H1 (cell line): ENCODE measurements at regions of chr2 and their contacts with region 1.

Region 1: DNA sequence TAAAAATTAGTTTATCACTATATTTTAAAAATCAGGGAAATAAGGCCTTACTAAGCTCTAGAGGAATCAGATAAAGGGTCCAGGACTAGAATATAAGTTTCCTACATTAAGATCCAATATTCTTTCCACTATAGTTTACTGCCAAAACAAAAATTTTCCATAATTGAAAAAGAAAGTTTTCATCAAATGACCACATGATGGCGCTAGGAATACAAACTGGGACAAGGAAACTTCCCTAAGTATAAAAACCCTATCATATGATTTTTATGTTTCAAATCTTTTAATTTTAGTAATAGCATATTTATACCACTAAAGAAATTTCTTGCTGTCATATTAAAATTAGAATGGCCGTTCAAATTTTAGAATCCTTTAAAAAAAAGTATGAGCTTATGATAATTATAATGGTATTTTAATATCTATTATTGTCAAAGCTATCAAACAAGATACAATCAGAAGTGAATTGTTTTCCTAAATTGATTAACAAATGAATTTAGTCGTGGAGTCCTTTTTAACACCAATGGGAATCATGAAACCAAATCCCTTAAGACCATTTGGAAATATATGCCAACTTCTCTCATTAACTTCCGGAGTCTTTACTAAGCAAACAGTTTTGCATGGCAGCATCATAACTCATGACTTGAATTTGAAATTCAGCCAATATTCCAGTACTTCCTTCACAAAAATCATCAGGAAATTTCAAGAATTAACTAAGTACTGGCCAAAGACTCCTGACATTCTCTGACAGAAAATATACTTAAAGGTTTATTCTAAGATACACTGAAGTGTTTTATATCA is 70.3 kb downstream of the SCN1A start:
- DNase-seq: no peak
- H3K4me3 ChIP-seq: no peak overlapping the region
- H3K27ac ChIP-seq: no peak overlapping the region
- H3K4me1 ChIP-seq: no peaks in the 10 kb centered on the region
- H3K27me3 ChIP-seq: no peaks in the 10 kb centered on the region
- CTCF ChIP-seq: peak in 2 of 3 experiments; percentile 28 to 31; a peak in 2 of 4 replicates
- EP300 ChIP-seq: no peak
- POLR2A ChIP-seq: no peak
- RAD21 ChIP-seq: peak in 1 of 2 experiments; percentile 48; a peak in 3 of 4 replicates

Region 2: DNA sequence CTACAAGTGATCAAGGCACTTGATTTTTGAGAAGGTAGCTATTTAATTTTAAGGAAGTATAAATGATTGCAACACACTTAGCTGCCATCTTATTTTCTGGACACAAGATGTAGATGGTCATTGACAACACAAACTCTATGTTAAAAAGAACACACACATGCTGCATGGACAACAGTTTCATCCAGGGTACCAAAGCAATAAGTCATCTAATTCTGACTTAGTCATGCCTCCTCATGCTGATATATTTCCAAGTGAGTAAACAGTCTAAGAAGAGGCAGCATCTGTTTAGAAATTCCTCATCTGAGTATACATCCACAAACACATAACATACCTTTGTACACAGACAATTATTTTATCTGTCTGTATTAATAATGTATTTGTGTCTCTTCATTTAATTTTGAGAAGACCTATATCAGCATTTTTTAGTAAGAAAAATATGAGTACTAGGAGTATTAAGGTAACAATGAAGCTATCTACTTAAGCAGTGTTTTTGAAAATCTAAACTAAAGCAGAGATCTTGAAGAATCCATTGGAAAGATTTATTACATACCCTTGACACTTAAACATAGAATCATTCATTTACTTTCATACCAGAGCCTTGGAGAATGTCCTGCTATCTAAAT is 14.7 kb before region 1 on chr2:
- CTCF ChIA-PET with region 1: interaction called, 11 read pairs
- POLR2A ChIA-PET with region 1: no interaction called
- DNase-seq: no peak
- H3K4me3 ChIP-seq: no peak overlapping the region
- H3K27ac ChIP-seq: no peak overlapping the region
- H3K4me1 ChIP-seq: no peaks in the 10 kb centered on the region; a peak in 2 of 7 replicates
- H3K27me3 ChIP-seq: no peaks in the 10 kb centered on the region
- CTCF ChIP-seq: no peak
- EP300 ChIP-seq: no peak
- POLR2A ChIP-seq: no peak
- RAD21 ChIP-seq: no peak

Region 3: DNA sequence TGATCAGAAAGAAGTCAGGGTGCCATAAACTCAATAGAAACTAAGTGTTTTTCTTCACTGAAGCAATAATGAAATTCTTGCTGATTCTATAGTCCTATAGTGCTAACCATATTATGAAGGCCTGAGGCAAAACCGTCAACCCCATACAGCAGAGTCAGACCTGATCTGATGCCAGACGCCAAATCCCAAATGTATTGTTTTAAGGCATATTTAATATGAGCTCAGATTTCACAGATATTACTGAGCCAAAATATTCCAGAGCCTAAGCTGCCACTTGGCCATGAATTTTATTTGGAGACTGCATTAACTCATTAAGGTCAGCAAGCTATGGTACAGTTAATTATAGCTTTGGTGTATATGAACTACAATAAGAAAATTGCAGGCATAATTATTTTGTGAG is 16.9 kb after region 1 on chr2:
- CTCF ChIA-PET with region 1: interaction called, 11 read pairs
- POLR2A ChIA-PET with region 1: no interaction called
- DNase-seq: no peak
- H3K4me3 ChIP-seq: no peak overlapping the region
- H3K27ac ChIP-seq: no peak overlapping the region
- H3K4me1 ChIP-seq: no peaks in the 10 kb centered on the region
- H3K27me3 ChIP-seq: no peaks in the 10 kb centered on the region
- CTCF ChIP-seq: no peak
- EP300 ChIP-seq: no peak
- POLR2A ChIP-seq: no peak
- RAD21 ChIP-seq: no peak

Region 4: GRCh38 chr2:166106431-166107015 is 49.0 kb after region 1 on chr2:
- CTCF ChIA-PET with region 1: interaction called, 28 read pairs
- POLR2A ChIA-PET with region 1: no interaction called
- DNase-seq: no peak
- H3K4me3 ChIP-seq: no peak overlapping the region
- H3K27ac ChIP-seq: no peak overlapping the region
- H3K4me1 ChIP-seq: no peaks in the 10 kb centered on the region
- H3K27me3 ChIP-seq: no peaks in the 10 kb centered on the region
- CTCF ChIP-seq: peak in 2 of 3 experiments; percentile 73 to 82; a peak in 3 of 4 replicates
- EP300 ChIP-seq: no peak
- POLR2A ChIP-seq: no peak
- RAD21 ChIP-seq: peak; percentile 84 to 85

Region 5: DNA sequence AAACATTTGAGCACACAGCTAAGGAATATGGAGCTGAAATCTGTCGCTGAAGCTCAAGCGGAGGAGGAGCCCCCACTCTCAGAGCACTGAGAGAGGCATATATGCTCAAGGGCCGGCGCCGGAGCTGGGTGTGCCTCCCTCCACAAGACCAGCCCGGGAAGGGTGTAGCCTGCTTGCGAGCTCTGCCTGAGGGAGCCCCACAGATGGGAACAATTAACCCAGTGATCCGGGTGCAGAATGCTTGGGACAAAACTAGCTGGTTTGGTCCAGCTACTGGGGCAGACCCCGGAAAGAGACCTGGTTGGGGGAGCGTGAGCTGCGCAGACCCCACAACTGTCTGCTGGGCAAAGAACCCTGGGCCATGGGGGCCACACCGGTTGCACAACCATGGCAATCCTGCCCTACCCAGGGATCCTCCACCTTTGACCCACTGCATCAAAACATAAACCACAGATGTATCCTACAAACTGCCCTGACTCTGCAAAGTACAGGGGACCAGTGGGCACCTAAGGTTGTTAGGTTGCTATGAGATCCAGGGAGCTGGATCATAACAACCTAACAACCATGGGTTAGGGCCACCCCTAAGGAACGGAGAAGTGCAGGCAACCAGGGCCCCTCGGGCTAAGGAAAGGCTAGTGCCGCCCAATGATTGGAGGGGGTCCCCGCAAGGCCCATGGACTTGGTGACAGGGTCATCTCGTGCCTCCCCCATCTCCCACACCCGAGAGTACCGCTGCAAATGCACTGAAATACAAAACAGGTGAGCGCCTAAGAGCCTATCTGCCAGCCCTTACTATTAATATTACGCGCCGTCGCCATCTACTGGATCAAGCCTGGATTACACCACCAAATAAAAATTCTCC is 123.6 kb after region 1 on chr2:
- CTCF ChIA-PET with region 1: interaction called, 14 read pairs
- POLR2A ChIA-PET with region 1: no interaction called
- DNase-seq: peak in 1 of 2 experiments; percentile 81
- H3K4me3 ChIP-seq: no peak overlapping the region
- H3K27ac ChIP-seq: no peak overlapping the region
- H3K4me1 ChIP-seq: peaks cover 0 to 4% (median 0%) of the 10 kb centered on the region in 4 experiments; a peak in 2 of 7 replicates
- H3K27me3 ChIP-seq: no peaks in the 10 kb centered on the region
- CTCF ChIP-seq: peak in 2 of 3 experiments; percentile 50 to 54; a peak in 3 of 4 replicates
- EP300 ChIP-seq: no peak
- POLR2A ChIP-seq: no peak
- RAD21 ChIP-seq: peak; percentile 53 to 67